Naive thymus-derived CD4-positive, alpha-beta T cell (primary cell): ENCODE measurements at regions of chr2 and their contacts with region 1.

Region 1: DNA sequence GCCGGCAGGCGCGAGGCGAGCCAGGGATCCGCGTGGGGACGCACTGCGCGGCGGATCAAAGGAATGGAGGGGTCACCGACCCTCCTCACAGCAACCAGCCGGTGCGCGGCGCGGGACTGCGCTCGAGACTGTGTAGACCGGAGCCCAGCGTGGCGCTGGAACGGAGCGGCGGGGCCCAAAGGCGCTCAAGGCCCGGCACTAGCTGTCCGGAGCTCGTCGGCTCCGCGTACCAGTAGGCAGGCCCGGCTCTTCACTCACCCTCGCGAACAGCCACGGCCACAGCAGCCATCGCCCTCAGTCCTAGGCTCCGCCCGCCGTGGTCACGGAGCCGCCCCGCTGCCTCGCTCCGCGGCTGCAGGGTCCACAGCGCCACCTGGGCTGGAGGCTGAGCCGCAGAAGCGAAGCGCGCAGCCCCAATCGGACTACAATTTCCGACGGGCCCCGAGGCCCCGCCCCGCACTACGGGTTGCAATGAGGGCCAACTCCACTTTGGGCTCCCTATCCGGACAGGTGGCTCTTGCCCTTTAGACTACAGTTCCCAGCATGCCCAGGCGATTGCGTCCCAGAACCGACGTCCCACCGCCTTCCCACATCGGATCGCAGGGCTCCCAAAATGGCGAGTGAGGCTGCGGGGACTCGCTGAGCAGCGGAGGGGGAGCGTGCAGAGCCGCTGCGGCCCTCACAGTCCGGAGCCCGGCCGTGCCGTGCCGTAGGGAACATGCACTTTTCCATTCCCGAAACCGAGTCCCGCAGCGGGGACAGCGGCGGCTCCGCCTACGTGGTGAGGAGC is at the starts of genes EIF2B4 and SNX17:
- DNase-seq: peak; percentile 96 to 100 (median 99)
- ATAC-seq: peak; percentile 96
- H3K4me3 ChIP-seq: peak within 1 kb of the TSS; percentile 94
- H3K4me3 Mint-ChIP-seq: peak within 1 kb of the TSS; percentile 85 to 100 (median 96)
- H3K27ac ChIP-seq: peak within 1 kb of the TSS; percentile 93
- H3K27ac Mint-ChIP-seq: peak within 1 kb of the TSS; percentile 81 to 99 (median 95)
- H3K4me1 ChIP-seq: peaks cover 29 to 30% of the 10 kb centered on the region in 2 donors
- H3K4me1 Mint-ChIP-seq: peaks cover 29 to 53% (median 46%) of the 10 kb centered on the region in 7 donors
- H3K27me3 ChIP-seq: no peaks in the 10 kb centered on the region
- H3K27me3 Mint-ChIP-seq: no peaks in the 10 kb centered on the region
- total RNA-seq, gene EIF2B4: 36.5 to 56.1 (median 44.1) TPM
- total RNA-seq, gene SNX17: 71.0 to 128 (median 111) TPM

Region 2: GRCh38 chr2:27071277-27071989 is 298.8 kb before region 1 on chr2 and contains the start of gene OST4:
- CTCF ChIA-PET with region 1: no interaction called
- POLR2A ChIA-PET with region 1: no interaction called
- intact Hi-C with region 1: loop called (anchors 1 kb)
- DNase-seq: peak; percentile 81 to 97 (median 87)
- ATAC-seq: peak; percentile 96
- H3K4me3 ChIP-seq: peak within 1 kb of the TSS; percentile 83
- H3K4me3 Mint-ChIP-seq: peak within 1 kb of the TSS; percentile 96 to 99 (median 97)
- H3K27ac ChIP-seq: peak within 1 kb of the TSS; percentile 97
- H3K27ac Mint-ChIP-seq: peak within 1 kb of the TSS; percentile 93 to 98 (median 97)
- H3K4me1 ChIP-seq: peaks cover 29 to 41% of the 10 kb centered on the region in 2 donors
- H3K4me1 Mint-ChIP-seq: peaks cover 57 to 86% (median 76%) of the 10 kb centered on the region in 7 donors
- H3K27me3 ChIP-seq: no peaks in the 10 kb centered on the region
- H3K27me3 Mint-ChIP-seq: no peaks in the 10 kb centered on the region
- total RNA-seq, gene OST4: 241 to 398 (median 263) TPM

Region 3: GRCh38 chr2:27211829-27212627 is 158.2 kb before region 1 on chr2 and contains the starts of genes ATRAID and SLC5A6:
- CTCF ChIA-PET with region 1: no interaction called
- POLR2A ChIA-PET with region 1: interaction called, 6 read pairs
- intact Hi-C with region 1: loop called (anchors 1 to 5 kb)
- DNase-seq: peak; percentile 86 to 93 (median 92)
- ATAC-seq: peak; percentile 93
- H3K4me3 ChIP-seq: peak within 1 kb of the TSS; percentile 91
- H3K4me3 Mint-ChIP-seq: peak within 1 kb of the TSS; percentile 89 to 100 (median 99)
- H3K27ac ChIP-seq: peak within 1 kb of the TSS; percentile 100
- H3K27ac Mint-ChIP-seq: peak within 1 kb of the TSS; percentile 99 to 100 (median 100)
- H3K4me1 ChIP-seq: peaks cover 14 to 17% of the 10 kb centered on the region in 2 donors
- H3K4me1 Mint-ChIP-seq: peaks cover 18 to 49% (median 42%) of the 10 kb centered on the region in 7 donors
- H3K27me3 ChIP-seq: no peaks in the 10 kb centered on the region
- H3K27me3 Mint-ChIP-seq: no peaks in the 10 kb centered on the region
- total RNA-seq, gene ATRAID: 71.0 to 113 (median 90.7) TPM
- total RNA-seq, gene SLC5A6: 25.6 to 203 (median 44.3) TPM

Region 4: GRCh38 chr2:27322766-27323595 is 47.2 kb before region 1 on chr2 and contains the start of gene MPV17:
- CTCF ChIA-PET with region 1: no interaction called
- POLR2A ChIA-PET with region 1: interaction called, 40 read pairs
- intact Hi-C with region 1: loop called (anchors 1 kb)
- DNase-seq: peak; percentile 65 to 87 (median 82)
- ATAC-seq: peak; percentile 98
- H3K4me3 ChIP-seq: peak within 1 kb of the TSS; percentile 99
- H3K4me3 Mint-ChIP-seq: peak within 1 kb of the TSS; percentile 91 to 100 (median 99)
- H3K27ac ChIP-seq: peak within 1 kb of the TSS; percentile 95
- H3K27ac Mint-ChIP-seq: peak within 1 kb of the TSS; percentile 93 to 100 (median 99)
- H3K4me1 ChIP-seq: peaks cover 17 to 22% of the 10 kb centered on the region in 2 donors
- H3K4me1 Mint-ChIP-seq: peaks cover 14 to 30% (median 23%) of the 10 kb centered on the region in 7 donors
- H3K27me3 ChIP-seq: no peaks in the 10 kb centered on the region
- H3K27me3 Mint-ChIP-seq: no peaks in the 10 kb centered on the region
- total RNA-seq, gene MPV17: 55.7 to 119 (median 94.4) TPM

Region 5: DNA sequence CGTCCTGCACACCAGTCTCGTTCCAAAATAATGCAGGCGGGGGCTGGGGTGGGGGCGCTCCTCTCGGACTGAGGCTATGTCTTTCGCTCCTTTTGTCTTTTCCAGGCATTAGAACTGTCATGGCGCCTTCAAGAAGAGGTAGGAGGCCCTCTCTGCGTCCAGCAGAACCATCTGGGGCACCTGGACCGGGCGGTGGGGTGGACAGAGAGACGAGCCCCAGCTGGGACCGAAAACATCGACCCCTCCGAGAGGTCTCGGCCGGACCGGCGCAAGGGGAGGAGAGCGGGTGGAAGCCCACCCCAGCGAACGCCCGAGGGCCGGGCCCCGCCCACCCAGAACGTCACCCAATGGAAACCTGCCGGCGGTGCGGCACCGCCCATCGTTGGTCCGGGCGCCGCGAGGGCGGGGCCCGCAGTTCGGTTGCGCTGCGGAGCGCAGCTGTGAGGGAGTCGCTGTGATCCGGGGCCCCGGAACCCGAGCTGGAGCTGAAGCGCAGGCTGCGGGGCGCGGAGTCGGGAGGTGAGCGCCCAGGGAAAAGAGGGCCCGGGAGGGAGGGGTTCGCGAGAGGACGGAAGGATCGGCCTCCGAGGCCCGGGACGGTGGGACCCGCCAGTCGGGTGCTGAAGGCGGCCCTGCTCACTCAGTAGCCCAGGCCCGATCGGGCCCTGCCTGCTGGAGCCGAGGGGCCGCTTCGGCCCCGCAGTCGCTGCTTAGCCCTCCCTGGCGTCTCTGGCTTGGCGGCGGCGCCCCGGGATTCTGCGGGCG is 58.2 kb after region 1 on chr2 and contains the start of gene NRBP1:
- CTCF ChIA-PET with region 1: interaction called, 3 read pairs
- POLR2A ChIA-PET with region 1: interaction called, 45 read pairs
- intact Hi-C with region 1: loop called (anchors 1 kb)
- DNase-seq: peak; percentile 83 to 97 (median 88)
- ATAC-seq: peak; percentile 97
- H3K4me3 ChIP-seq: peak within 1 kb of the TSS; percentile 84
- H3K4me3 Mint-ChIP-seq: peak within 1 kb of the TSS; percentile 91 to 99 (median 98)
- H3K27ac ChIP-seq: peak within 1 kb of the TSS; percentile 94
- H3K27ac Mint-ChIP-seq: peak within 1 kb of the TSS; percentile 89 to 99 (median 97)
- H3K4me1 ChIP-seq: peaks cover 23 to 28% of the 10 kb centered on the region in 2 donors
- H3K4me1 Mint-ChIP-seq: peaks cover 32 to 48% (median 39%) of the 10 kb centered on the region in 7 donors
- H3K27me3 ChIP-seq: no peaks in the 10 kb centered on the region
- H3K27me3 Mint-ChIP-seq: peaks cover 0 to 3% (median 0%) of the 10 kb centered on the region in 5 donors
- total RNA-seq, gene NRBP1: 94.4 to 181 (median 121) TPM

Region 6: GRCh38 chr2:27663463-27664249 is 293.4 kb after region 1 on chr2 and contains the starts of genes SLC4A1AP and SUPT7L:
- CTCF ChIA-PET with region 1: no interaction called
- POLR2A ChIA-PET with region 1: interaction called, 5 read pairs
- intact Hi-C with region 1: loop called (anchors 1 kb)
- DNase-seq: peak; percentile 74 to 88 (median 82)
- ATAC-seq: peak; percentile 89
- H3K4me3 ChIP-seq: peak within 1 kb of the TSS; percentile 98
- H3K4me3 Mint-ChIP-seq: peak within 1 kb of the TSS; percentile 94 to 100 (median 100)
- H3K27ac ChIP-seq: peak within 1 kb of the TSS; percentile 95
- H3K27ac Mint-ChIP-seq: peak within 1 kb of the TSS; percentile 98 to 100 (median 99)
- H3K4me1 ChIP-seq: peaks cover 18 to 20% of the 10 kb centered on the region in 2 donors
- H3K4me1 Mint-ChIP-seq: peaks cover 35 to 75% (median 64%) of the 10 kb centered on the region in 7 donors
- H3K27me3 ChIP-seq: no peaks in the 10 kb centered on the region
- H3K27me3 Mint-ChIP-seq: no peaks in the 10 kb centered on the region
- total RNA-seq, gene SLC4A1AP: 14.7 to 27.0 (median 23.2) TPM
- total RNA-seq, gene SUPT7L: 37.9 to 58.6 (median 46.5) TPM